Heart right ventricle (tissue), 16 donors: ENCODE measurements at regions of chrX and their contacts with region 1.

Region 1: DNA sequence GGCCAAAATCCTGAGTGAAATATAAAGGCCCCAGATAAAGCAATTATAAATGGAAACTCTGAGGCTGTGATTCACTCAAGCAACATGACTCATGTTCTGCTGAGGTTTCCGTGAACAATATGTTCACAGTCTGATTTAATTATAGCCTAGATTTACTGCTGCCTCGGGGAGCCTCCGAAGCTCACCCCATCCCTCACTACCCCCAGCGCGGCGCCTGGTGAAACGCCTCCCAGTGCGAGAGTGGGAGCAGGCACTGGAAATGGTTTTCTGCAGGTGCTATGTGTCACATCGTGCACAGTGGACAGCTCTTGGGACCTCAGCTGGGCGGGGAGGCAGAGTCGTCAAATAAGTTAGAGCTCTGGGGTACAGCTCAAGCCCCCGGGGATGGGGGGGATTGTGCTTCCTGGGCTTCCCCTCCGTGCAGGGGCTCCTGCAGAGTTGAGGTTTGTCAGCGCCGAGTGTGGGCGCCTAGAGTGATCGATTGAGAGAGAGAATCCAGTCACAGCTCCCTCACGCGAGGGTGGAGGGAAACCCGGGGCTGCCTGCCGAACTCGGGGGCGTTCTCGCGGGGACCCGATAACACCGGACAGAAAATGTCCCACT is 110.6 kb downstream of the PHKA2 start:
- DNase-seq: peak in 1 of 2 donors; percentile 40
- ATAC-seq: peak; percentile 48 to 94 (median 86)
- H3K4me3 ChIP-seq: peak overlapping the region in 1 of 10 donors; percentile 20
- H3K27ac ChIP-seq: peak overlapping the region; percentile 44 to 80 (median 72)
- H3K4me1 ChIP-seq: peaks cover 0 to 27% (median 8%) of the 10 kb centered on the region in 9 donors
- H3K27me3 ChIP-seq: no peaks in the 10 kb centered on the region
- CTCF ChIP-seq: no peak

Region 2: DNA sequence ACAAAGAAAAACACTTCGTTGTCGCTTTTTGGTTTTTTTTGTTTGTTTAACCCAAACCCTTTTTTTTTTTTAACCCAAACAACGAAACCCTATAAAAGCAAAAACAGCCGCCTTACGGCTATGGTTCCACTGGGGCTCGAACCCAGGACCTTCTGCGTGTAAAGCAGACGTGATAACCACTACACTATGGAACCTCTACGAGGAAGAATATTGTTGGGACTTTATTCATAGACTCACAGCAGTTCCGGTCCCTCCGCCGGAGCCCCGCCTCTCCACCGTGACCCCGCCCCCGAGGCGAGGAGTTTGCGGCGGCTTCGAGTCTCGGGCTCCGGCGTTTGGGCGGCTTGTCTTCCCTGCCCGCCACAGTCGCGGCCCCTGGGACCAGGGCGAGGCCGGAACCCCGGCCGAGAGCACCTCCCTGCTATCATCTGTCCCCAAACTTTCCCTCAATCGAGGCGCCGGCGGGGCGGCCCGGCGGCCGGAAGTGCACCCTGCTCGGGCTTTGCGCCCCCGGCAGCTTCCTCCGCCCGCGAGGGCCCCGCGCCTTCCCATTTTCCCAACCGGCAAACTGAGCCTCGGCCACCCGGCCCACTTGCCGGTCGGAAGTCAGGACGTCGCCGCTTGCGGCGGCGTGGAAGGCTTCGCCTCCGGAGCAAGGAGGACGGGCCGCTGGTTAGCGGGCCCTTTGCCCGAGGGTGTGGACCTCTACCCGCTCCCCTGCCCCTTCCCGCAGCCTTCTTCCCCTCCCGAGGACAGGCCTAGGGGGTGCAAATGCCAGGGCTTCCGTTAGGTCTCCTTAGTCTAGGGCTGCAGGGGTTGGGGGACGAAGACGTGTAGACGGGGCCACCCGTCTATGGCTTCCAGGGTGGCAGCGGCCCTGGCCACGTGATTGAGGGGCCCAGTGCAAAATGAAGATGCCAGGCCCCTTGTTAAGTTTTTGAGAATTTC is 198.2 kb before region 1 on chrX:
- intact Hi-C with region 1: loop called in 1 of 10 experiments (anchors 5 kb)
- DNase-seq: peak; percentile 75 to 77
- ATAC-seq: peak; percentile 92 to 98 (median 96)
- H3K4me3 ChIP-seq: peak overlapping the region; percentile 43 to 81 (median 72)
- H3K27ac ChIP-seq: peak overlapping the region; percentile 64 to 95 (median 84)
- H3K4me1 ChIP-seq: peaks cover 0 to 7% (median 0%) of the 10 kb centered on the region in 9 donors
- H3K27me3 ChIP-seq: peaks cover 0 to 11% (median 0%) of the 10 kb centered on the region in 7 donors
- CTCF ChIP-seq: no peak

Region 3: GRCh38 chrX:18833071-18833731 is 40.1 kb before region 1 on chrX:
- intact Hi-C with region 1: loop called in 1 of 10 experiments (anchors 5 kb)
- DNase-seq: peak; percentile 27 to 38
- ATAC-seq: peak; percentile 89 to 97 (median 94)
- H3K4me3 ChIP-seq: peak overlapping the region in 6 of 10 donors; percentile 5 to 34 (median 21)
- H3K27ac ChIP-seq: peak overlapping the region; percentile 22 to 78 (median 64)
- H3K4me1 ChIP-seq: no peaks in the 10 kb centered on the region
- H3K27me3 ChIP-seq: peaks cover 0 to 8% (median 0%) of the 10 kb centered on the region in 7 donors
- CTCF ChIP-seq: no peak

Region 4: DNA sequence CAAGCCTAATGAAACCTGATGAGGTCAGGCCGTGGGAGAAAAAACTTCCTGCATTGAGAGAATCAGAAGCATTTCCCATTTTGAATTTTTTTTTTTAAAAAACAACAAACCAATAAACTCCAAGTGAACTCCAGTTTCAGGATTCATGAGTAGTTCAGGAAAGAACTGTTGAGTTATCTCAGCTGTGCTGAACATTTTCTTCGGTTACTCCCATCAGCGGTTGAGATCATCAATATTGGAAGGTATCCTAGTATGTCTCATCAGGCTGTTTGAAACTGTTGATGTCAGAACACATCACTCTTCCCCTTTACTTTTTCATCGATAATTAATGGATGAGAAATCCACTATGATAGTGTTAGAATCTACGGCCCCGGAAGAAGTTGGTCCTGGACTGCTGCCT is 331.3 kb after region 1 on chrX:
- intact Hi-C with region 1: no loop called
- DNase-seq: no peak
- ATAC-seq: no peak
- H3K4me3 ChIP-seq: no peak overlapping the region
- H3K27ac ChIP-seq: no peak overlapping the region
- H3K4me1 ChIP-seq: no peaks in the 10 kb centered on the region
- H3K27me3 ChIP-seq: peaks cover 0 to 1% (median 0%) of the 10 kb centered on the region in 7 donors
- CTCF ChIP-seq: no peak